ENCODE measurements at regions of chr6 and their contacts with region 1.

Region 1: GRCh38 chr6:113858480-113859348 is 1.6 kb downstream of the MARCKS start:
- DNase-seq: peak; percentile 92
- H3K4me3 ChIP-seq: peak overlapping the region; percentile 81 to 100 (median 100)
- H3K27ac ChIP-seq: peak overlapping the region; percentile 100
- H3K4me1 ChIP-seq: peaks cover 30% of the 10 kb centered on the region
- H3K27me3 ChIP-seq: no peaks in the 10 kb centered on the region
- CTCF ChIP-seq: peak; percentile 82 to 98
- POLR2A ChIP-seq: peak; percentile 85

Region 2: DNA sequence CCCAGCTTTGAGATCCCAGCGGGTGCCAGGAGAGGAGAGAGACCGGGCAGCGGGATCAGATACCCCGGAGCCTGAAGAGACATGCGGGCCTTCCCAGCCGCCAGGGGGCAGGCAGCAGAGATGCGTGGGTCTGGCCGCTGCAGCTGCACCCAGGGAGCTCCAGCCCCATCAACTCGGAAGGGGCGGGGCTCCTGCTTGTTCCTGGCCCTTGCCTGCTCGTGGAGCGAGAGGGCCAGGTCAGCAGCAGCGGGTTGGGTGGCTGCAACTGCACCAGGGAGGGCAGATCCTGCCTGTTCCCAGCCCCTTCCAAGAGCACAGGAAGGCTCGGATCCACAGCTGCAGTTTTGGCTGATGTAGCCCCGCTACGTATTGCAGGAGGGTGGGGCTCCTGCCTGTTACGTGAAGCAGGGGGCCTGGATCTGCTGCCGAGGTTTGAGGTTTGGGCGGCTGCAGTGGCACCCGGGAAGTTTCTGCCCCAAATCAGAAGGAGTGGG is 978.7 kb before region 1 on chr6:
- CTCF ChIA-PET with region 1: interaction called, 17 read pairs
- POLR2A ChIA-PET with region 1: interaction called, 3 read pairs
- dilution Hi-C with region 1: no loop called
- intact Hi-C with region 1: loop called (anchors 1 kb)
- DNase-seq: no peak
- H3K4me3 ChIP-seq: no peak overlapping the region
- H3K27ac ChIP-seq: no peak overlapping the region
- H3K4me1 ChIP-seq: peaks cover 23% of the 10 kb centered on the region
- H3K27me3 ChIP-seq: no peaks in the 10 kb centered on the region
- CTCF ChIP-seq: no peak
- POLR2A ChIP-seq: no peak

Region 3: GRCh38 chr6:113122060-113122459 is 736.7 kb before region 1 on chr6:
- CTCF ChIA-PET with region 1: interaction called, 53 read pairs
- POLR2A ChIA-PET with region 1: interaction called, 4 read pairs
- dilution Hi-C with region 1: no loop called
- intact Hi-C with region 1: loop called (anchors 1 kb)
- DNase-seq: peak; percentile 97
- H3K4me3 ChIP-seq: no peak overlapping the region
- H3K27ac ChIP-seq: peak overlapping the region; percentile 89
- H3K4me1 ChIP-seq: peaks cover 40% of the 10 kb centered on the region
- H3K27me3 ChIP-seq: no peaks in the 10 kb centered on the region
- CTCF ChIP-seq: peak; percentile 44
- POLR2A ChIP-seq: peak; percentile 17

Region 4: DNA sequence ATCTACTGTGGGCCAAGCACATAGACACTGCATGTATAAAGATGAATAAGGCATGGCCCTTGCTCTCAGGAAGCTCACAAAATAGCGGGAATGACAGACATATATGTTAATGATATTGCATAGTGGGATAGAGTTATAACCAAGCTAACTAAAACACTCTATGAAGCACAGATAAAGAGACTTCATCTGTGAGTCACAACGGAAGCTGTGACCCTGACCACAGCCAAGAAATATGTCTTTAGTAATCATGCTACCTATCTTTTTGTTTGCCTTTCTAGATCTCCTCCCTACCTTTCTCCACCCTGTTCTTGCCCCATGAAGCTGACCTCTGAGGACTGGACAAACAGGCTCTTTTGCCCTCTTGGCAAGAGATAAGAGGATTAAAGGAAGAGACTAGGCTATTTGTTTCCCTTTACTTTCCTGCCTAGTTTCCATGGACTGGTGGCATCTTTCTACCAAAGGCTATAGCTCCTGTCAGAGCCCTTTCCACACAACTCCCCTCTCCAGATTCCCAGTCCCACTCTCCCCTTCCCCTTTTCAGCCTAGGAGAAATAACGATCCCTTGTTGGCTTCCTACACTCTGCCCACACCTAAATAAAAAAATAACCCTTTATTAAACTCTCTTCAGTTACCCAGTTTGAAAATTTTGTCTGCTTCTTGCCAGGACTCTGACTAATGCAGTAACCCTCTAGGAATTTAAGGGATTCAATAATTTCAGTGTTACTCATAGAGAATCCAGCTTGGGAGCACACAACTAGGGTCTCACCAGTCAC is 506.5 kb before region 1 on chr6:
- CTCF ChIA-PET with region 1: interaction called, 5 read pairs
- POLR2A ChIA-PET with region 1: no interaction called
- dilution Hi-C with region 1: no loop called
- intact Hi-C with region 1: loop called (anchors 5 kb)
- DNase-seq: peak; percentile 62
- H3K4me3 ChIP-seq: no peak overlapping the region
- H3K27ac ChIP-seq: peak overlapping the region; percentile 80
- H3K4me1 ChIP-seq: peaks cover 40% of the 10 kb centered on the region
- H3K27me3 ChIP-seq: no peaks in the 10 kb centered on the region
- CTCF ChIP-seq: no peak
- POLR2A ChIP-seq: no peak

Region 5: GRCh38 chr6:113488812-113489685 is 369.7 kb before region 1 on chr6:
- CTCF ChIA-PET with region 1: interaction called, 12 read pairs
- POLR2A ChIA-PET with region 1: no interaction called
- dilution Hi-C with region 1: no loop called
- intact Hi-C with region 1: no loop called
- DNase-seq: no peak
- H3K4me3 ChIP-seq: no peak overlapping the region
- H3K27ac ChIP-seq: no peak overlapping the region
- H3K4me1 ChIP-seq: no peaks in the 10 kb centered on the region
- H3K27me3 ChIP-seq: no peaks in the 10 kb centered on the region
- CTCF ChIP-seq: peak in 1 of 2 donors; percentile 6
- POLR2A ChIP-seq: no peak

Region 6: GRCh38 chr6:113723182-113723581 is 135.5 kb before region 1 on chr6:
- CTCF ChIA-PET with region 1: interaction called, 5 read pairs
- POLR2A ChIA-PET with region 1: no interaction called
- dilution Hi-C with region 1: no loop called
- intact Hi-C with region 1: loop called (anchors 1 kb)
- DNase-seq: peak; percentile 85
- H3K4me3 ChIP-seq: peak overlapping the region in 1 of 3 experiments; percentile 30
- H3K27ac ChIP-seq: peak overlapping the region; percentile 45
- H3K4me1 ChIP-seq: peaks cover 9% of the 10 kb centered on the region
- H3K27me3 ChIP-seq: no peaks in the 10 kb centered on the region
- CTCF ChIP-seq: no peak
- POLR2A ChIP-seq: no peak

Region 7: GRCh38 chr6:113980937-113981554 is 122.3 kb after region 1 on chr6:
- CTCF ChIA-PET with region 1: no interaction called
- POLR2A ChIA-PET with region 1: no interaction called
- dilution Hi-C with region 1: no loop called
- intact Hi-C with region 1: no loop called
- DNase-seq: peak; percentile 35
- H3K4me3 ChIP-seq: no peak overlapping the region
- H3K27ac ChIP-seq: no peak overlapping the region
- H3K4me1 ChIP-seq: no peaks in the 10 kb centered on the region
- H3K27me3 ChIP-seq: no peaks in the 10 kb centered on the region
- CTCF ChIP-seq: peak; percentile 59 to 71
- POLR2A ChIP-seq: no peak

Region 8: DNA sequence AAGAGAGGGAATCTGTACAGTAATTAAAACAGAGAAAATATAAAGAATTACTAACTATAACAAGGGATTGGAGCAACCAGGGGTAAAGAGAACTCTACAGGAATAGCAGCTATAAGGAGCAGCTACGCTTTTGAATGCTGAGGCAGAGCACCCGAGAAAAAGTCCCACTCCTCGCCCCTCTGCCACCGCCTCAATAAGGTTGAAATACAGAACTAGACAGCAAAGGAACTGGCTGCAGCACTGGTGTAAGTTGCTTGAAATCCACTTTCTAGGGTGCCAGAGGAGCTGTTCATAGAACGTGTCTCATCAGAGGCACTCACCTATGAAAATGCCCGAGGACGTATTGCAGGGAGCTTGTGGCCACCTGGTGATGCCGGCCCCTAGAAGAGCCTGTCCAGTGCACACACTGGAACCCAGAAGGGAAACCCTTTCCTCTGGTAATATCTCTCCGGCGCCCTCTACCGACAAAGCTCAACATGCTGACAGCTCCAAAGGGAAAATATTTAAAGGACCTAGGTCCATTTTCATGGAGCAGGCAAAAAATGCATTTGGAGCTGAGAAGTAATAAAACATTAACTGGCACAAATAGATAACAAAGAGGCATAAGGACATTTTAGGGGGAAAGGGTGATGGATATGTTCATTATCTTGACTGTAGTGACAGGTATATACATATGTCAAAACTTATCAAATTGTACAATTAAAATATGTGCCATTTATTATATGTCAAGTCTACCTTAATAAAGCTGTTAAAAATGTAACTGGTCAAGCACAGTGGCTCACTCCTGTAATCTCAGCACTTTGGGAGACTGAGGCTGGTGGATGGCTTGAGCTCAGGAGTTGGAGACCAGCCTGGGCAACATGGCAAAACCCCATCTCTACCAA is 249.6 kb after region 1 on chr6:
- CTCF ChIA-PET with region 1: no interaction called
- POLR2A ChIA-PET with region 1: no interaction called
- dilution Hi-C with region 1: no loop called
- intact Hi-C with region 1: no loop called
- DNase-seq: peak; percentile 71
- H3K4me3 ChIP-seq: no peak overlapping the region
- H3K27ac ChIP-seq: no peak overlapping the region
- H3K4me1 ChIP-seq: no peaks in the 10 kb centered on the region
- H3K27me3 ChIP-seq: peaks cover 8 to 15% of the 10 kb centered on the region in 2 experiments
- CTCF ChIP-seq: peak; percentile 68 to 71
- POLR2A ChIP-seq: no peak

Measured in endothelial cell of umbilical vein (primary cell).